B cell (primary cell): ENCODE measurements at regions of chr6 and their contacts with region 1.

Region 1: DNA sequence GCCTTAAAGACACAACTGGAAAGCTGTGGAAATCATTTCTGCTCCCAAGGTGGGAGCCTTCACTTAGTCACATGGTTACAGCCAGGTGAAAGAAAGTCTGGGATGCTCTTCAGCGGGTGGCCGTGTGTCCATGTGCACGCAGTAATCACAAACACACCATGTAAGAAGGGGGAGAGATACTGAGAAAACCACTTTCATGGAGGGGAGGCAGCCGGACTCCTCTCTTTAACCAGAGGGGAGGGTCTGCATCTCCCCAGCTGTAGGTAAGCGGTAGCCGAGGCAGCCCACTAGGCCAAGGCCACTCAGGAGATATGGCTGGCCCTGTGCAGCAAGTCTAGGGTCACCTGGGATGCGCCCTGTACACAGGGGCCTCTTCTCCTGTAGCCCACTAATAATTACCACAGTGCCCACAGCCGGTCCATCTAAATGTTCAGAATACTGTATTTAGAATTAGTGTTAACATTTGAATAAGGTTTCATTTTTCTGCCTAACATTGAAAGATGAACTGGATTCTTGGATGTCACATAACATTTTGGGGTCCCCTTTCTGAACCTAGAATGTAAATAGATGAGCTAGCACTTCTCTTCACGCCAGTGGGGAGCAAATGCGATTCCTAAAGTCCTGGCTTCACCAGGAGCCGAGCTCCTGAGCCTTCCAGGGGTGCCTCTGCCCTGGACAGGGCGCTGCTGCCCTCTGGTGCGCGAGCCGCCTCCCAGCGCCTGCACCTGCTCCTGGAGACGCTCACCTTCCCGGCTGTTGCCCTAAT is 15.9 kb downstream of the GPR31 start:
- DNase-seq: peak; percentile 77
- ATAC-seq: peak; percentile 61
- H3K4me3 ChIP-seq: no peak overlapping the region
- H3K4me3 Mint-ChIP-seq: peak overlapping the region; percentile 62
- H3K27ac ChIP-seq: peak overlapping the region; percentile 50 to 68
- H3K27ac Mint-ChIP-seq: peak overlapping the region; percentile 92
- H3K4me1 ChIP-seq: peaks cover 32 to 39% of the 10 kb centered on the region in 2 donors
- H3K4me1 Mint-ChIP-seq: peaks cover 61% of the 10 kb centered on the region
- H3K27me3 ChIP-seq: no peaks in the 10 kb centered on the region
- H3K27me3 Mint-ChIP-seq: no peaks in the 10 kb centered on the region
- CTCF ChIP-seq: peak; percentile 98

Region 2: DNA sequence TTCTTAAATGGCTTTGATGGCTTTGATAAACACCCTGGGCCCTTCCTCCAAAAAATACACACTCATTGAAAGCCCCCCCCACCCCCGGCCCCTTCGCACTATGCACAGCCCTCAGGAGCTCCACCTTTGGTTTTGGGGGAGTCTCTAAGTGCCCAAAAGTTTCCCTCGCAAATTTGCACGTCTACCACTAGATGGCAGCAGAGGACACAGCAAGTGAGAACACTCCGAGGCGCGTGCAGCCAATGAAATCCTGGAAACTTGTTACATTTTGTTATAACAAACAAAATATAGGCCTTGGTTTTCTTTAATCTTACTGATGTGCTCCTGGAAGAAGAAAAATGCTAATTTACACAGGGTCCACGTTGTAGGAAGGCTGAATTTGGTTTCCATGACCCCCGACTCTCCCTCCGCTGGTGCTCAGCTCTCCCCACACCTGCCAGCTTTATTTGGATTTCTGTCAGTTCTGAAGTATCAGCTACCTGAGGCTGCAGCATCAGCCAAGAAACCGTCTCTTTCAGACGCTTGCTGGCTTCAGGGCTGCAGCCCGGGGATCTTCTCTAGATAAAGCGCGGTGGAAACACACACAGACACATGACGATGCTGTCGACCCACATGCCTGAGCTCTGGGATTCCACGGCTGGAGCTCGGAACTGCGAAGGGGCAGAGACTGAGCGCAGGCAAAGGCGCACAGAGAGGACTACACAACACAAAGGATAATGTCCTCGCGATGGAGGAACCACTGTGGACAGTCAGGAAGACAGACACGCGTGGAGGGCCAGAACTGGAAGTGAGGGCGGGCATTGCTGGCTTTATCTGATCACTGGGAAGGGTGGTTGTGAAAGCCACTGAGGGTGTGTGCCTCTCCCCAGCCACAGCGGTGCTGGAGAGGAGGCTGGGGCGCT is 366.4 kb before region 1 on chr6:
- CTCF ChIA-PET with region 1: interaction called, 23 read pairs
- POLR2A ChIA-PET with region 1: no interaction called
- intact Hi-C with region 1: loop called (anchors 1 kb)
- DNase-seq: peak; percentile 84
- ATAC-seq: peak; percentile 72
- H3K4me3 ChIP-seq: no peak overlapping the region
- H3K4me3 Mint-ChIP-seq: no peak overlapping the region
- H3K27ac ChIP-seq: no peak overlapping the region
- H3K27ac Mint-ChIP-seq: no peak overlapping the region
- H3K4me1 ChIP-seq: peaks cover 0 to 5% of the 10 kb centered on the region in 2 donors
- H3K4me1 Mint-ChIP-seq: peaks cover 2% of the 10 kb centered on the region
- H3K27me3 ChIP-seq: peaks cover 0 to 14% (median 6%) of the 10 kb centered on the region in 4 experiments
- H3K27me3 Mint-ChIP-seq: peaks cover 14% of the 10 kb centered on the region
- CTCF ChIP-seq: peak; percentile 85

Region 3: GRCh38 chr6:166956444-166957086 is 185.3 kb before region 1 on chr6 and contains the start of gene RNASET2:
- CTCF ChIA-PET with region 1: interaction called, 26 read pairs
- POLR2A ChIA-PET with region 1: interaction called, 8 read pairs
- intact Hi-C with region 1: no loop called
- DNase-seq: peak; percentile 96
- ATAC-seq: peak; percentile 85
- H3K4me3 ChIP-seq: peak within 1 kb of the TSS; percentile 79 to 97 (median 89)
- H3K4me3 Mint-ChIP-seq: peak within 1 kb of the TSS; percentile 93
- H3K27ac ChIP-seq: peak within 1 kb of the TSS; percentile 94 to 98
- H3K27ac Mint-ChIP-seq: peak within 1 kb of the TSS; percentile 100
- H3K4me1 ChIP-seq: peaks cover 65 to 78% of the 10 kb centered on the region in 2 donors
- H3K4me1 Mint-ChIP-seq: peaks cover 73% of the 10 kb centered on the region
- H3K27me3 ChIP-seq: no peaks in the 10 kb centered on the region
- H3K27me3 Mint-ChIP-seq: no peaks in the 10 kb centered on the region
- CTCF ChIP-seq: no peak
- total RNA-seq, gene RNASET2: 293 and 302 TPM in 2 replicates

Region 4: GRCh38 chr6:167005350-167006159 is 136.3 kb before region 1 on chr6:
- CTCF ChIA-PET with region 1: interaction called, 75 read pairs
- POLR2A ChIA-PET with region 1: no interaction called
- intact Hi-C with region 1: no loop called
- DNase-seq: no peak
- ATAC-seq: no peak
- H3K4me3 ChIP-seq: no peak overlapping the region
- H3K4me3 Mint-ChIP-seq: no peak overlapping the region
- H3K27ac ChIP-seq: no peak overlapping the region
- H3K27ac Mint-ChIP-seq: no peak overlapping the region
- H3K4me1 ChIP-seq: peaks cover 10% of the 10 kb centered on the region in 2 donors
- H3K4me1 Mint-ChIP-seq: peaks cover 15% of the 10 kb centered on the region
- H3K27me3 ChIP-seq: no peaks in the 10 kb centered on the region
- H3K27me3 Mint-ChIP-seq: no peaks in the 10 kb centered on the region
- CTCF ChIP-seq: no peak

Region 5: DNA sequence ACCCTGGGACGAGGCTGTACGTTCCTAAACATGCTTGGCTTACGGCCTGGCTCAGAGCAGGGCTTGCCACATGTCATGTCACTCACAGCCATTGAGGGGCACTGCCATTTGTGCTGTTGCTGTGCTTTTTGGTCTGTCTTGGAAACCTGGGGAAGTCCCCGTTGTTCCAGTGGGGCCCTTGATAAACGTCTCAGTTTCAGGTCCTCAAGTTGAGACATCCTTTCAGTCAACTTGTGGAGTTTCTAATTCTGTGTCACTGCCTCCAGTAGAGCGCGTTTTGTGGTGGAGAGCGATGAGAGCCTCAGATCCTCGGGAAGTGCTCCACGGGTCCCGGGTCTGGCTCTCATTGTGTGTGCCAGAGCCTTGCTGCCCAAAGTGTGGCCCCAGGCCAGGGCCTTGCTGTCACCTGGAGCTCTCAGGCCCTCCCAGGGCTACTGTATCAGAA is 62.0 kb before region 1 on chr6:
- CTCF ChIA-PET with region 1: interaction called, 14 read pairs
- POLR2A ChIA-PET with region 1: interaction called, 3 read pairs
- intact Hi-C with region 1: loop called (anchors 1 kb)
- DNase-seq: peak; percentile 93
- ATAC-seq: peak; percentile 99
- H3K4me3 ChIP-seq: peak overlapping the region in 1 of 5 experiments; percentile 48
- H3K4me3 Mint-ChIP-seq: peak overlapping the region; percentile 51
- H3K27ac ChIP-seq: peak overlapping the region; percentile 74 to 87
- H3K27ac Mint-ChIP-seq: peak overlapping the region; percentile 93
- H3K4me1 ChIP-seq: peaks cover 39 to 46% of the 10 kb centered on the region in 2 donors
- H3K4me1 Mint-ChIP-seq: peaks cover 36% of the 10 kb centered on the region
- H3K27me3 ChIP-seq: no peaks in the 10 kb centered on the region
- H3K27me3 Mint-ChIP-seq: no peaks in the 10 kb centered on the region
- CTCF ChIP-seq: peak; percentile 79

Region 6: DNA sequence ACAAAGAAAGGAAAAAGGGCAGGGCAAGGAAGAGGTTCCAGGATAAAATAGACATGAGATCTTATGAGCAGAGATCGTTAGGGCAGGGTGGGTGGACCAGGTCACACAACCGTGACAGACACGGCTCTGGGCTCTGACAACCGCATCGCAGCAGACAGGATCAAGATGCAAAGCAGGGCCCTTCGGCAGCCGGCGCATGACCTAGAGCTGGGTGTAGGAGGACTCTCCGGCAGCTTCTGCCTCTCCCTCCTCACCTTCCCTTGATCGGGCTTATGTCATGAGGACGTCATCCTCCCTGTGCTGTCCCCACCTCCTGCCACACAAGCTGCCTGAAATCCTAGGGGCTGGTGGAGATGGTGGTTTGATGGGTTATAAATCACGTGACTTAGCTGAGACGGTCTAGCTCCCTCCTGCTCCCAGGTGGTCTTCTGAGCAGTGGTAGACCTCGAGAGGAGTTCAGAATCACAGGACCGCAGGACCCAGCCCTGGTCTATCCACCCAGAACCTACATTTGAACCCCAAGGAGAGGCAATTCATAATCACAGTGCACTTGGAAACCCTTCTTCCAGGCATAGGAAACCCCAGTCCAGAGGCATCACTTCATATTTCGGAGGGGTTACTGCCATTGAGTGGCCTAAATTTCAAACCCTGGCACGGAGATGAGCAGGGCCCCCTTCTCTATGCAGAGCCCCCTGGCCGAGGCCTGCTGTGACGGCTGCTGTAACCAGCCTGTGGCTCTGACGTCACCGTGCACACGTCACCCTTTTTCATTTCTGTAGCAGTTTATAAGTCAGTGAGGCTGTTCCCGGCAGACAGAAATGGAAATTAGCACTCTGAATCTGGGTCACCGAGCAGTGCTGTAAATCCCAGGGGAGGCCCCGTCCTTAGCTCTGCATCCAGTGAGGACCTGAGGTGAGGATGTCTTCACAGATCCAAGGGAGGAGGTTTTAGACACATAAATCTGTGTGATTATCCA is 27.6 kb before region 1 on chr6:
- CTCF ChIA-PET with region 1: interaction called, 437 read pairs
- POLR2A ChIA-PET with region 1: interaction called, 5 read pairs
- intact Hi-C with region 1: loop called (anchors 1 kb)
- DNase-seq: peak; percentile 98
- ATAC-seq: peak; percentile 78
- H3K4me3 ChIP-seq: peak overlapping the region; percentile 46 to 77 (median 61)
- H3K4me3 Mint-ChIP-seq: peak overlapping the region; percentile 84
- H3K27ac ChIP-seq: peak overlapping the region; percentile 98 to 100
- H3K27ac Mint-ChIP-seq: peak overlapping the region; percentile 96
- H3K4me1 ChIP-seq: peaks cover 85 to 94% of the 10 kb centered on the region in 2 donors
- H3K4me1 Mint-ChIP-seq: peaks cover 94% of the 10 kb centered on the region
- H3K27me3 ChIP-seq: no peaks in the 10 kb centered on the region
- H3K27me3 Mint-ChIP-seq: no peaks in the 10 kb centered on the region
- CTCF ChIP-seq: no peak

Region 7: DNA sequence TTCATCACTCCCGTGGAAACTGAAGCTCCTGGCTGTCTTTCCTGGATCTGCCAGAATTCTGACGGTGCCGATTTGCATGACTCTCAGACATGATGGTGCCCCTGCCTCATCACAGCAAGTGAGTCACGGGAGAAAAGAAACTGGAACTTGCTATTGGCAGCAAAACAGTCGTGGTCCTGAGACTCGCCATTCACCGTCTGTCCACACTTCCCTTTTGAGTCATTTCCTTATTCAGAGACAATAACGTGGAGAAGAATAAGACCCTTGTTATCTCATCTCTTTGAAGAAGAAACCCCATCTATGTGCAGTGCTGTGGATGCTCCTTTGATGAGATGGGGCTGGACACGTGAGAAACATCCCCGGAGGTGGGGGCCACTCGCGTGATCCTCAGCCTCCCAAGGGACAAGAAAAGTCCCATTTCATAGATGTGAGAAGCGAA is 11.7 kb after region 1 on chr6:
- CTCF ChIA-PET with region 1: interaction called, 31 read pairs
- POLR2A ChIA-PET with region 1: no interaction called
- intact Hi-C with region 1: no loop called
- DNase-seq: peak; percentile 77
- ATAC-seq: peak; percentile 65
- H3K4me3 ChIP-seq: peak overlapping the region in 4 of 5 experiments; percentile 15 to 52 (median 37)
- H3K4me3 Mint-ChIP-seq: peak overlapping the region; percentile 86
- H3K27ac ChIP-seq: peak overlapping the region; percentile 72 to 83
- H3K27ac Mint-ChIP-seq: peak overlapping the region; percentile 89
- H3K4me1 ChIP-seq: peaks cover 44 to 55% of the 10 kb centered on the region in 2 donors
- H3K4me1 Mint-ChIP-seq: peaks cover 60% of the 10 kb centered on the region
- H3K27me3 ChIP-seq: no peaks in the 10 kb centered on the region
- H3K27me3 Mint-ChIP-seq: no peaks in the 10 kb centered on the region
- CTCF ChIP-seq: no peak

Region 8: GRCh38 chr6:167452338-167453081 is 310.7 kb after region 1 on chr6:
- CTCF ChIA-PET with region 1: no interaction called
- POLR2A ChIA-PET with region 1: no interaction called
- intact Hi-C with region 1: no loop called
- DNase-seq: no peak
- ATAC-seq: no peak
- H3K4me3 ChIP-seq: no peak overlapping the region
- H3K4me3 Mint-ChIP-seq: no peak overlapping the region
- H3K27ac ChIP-seq: no peak overlapping the region
- H3K27ac Mint-ChIP-seq: no peak overlapping the region
- H3K4me1 ChIP-seq: no peaks in the 10 kb centered on the region
- H3K4me1 Mint-ChIP-seq: no peaks in the 10 kb centered on the region
- H3K27me3 ChIP-seq: peaks cover 0 to 6% (median 0%) of the 10 kb centered on the region in 4 experiments
- H3K27me3 Mint-ChIP-seq: no peaks in the 10 kb centered on the region
- CTCF ChIP-seq: no peak